Activated CD4-positive, alpha-beta T cell treated with anti-CD3 and anti-CD28 coated beads, Interleukin-2, amount 10 ng/mL, durations not matched to agents 24 days and 14 days (primary cell): ENCODE measurements at regions of chr5 and their contacts with region 1.

Region 1: GRCh38 chr5:151252762-151253604 is at the start of gene GM2A:
- DNase-seq: peak; percentile 100
- H3K4me3 Mint-ChIP-seq: peak within 1 kb of the TSS; percentile 89
- H3K27ac Mint-ChIP-seq: peak within 1 kb of the TSS; percentile 95
- H3K4me1 Mint-ChIP-seq: peaks cover 30% of the 10 kb centered on the region
- H3K27me3 Mint-ChIP-seq: no peaks in the 10 kb centered on the region
- total RNA-seq, gene GM2A: 15.4 and 16.0 TPM in 2 replicates

Region 2: DNA sequence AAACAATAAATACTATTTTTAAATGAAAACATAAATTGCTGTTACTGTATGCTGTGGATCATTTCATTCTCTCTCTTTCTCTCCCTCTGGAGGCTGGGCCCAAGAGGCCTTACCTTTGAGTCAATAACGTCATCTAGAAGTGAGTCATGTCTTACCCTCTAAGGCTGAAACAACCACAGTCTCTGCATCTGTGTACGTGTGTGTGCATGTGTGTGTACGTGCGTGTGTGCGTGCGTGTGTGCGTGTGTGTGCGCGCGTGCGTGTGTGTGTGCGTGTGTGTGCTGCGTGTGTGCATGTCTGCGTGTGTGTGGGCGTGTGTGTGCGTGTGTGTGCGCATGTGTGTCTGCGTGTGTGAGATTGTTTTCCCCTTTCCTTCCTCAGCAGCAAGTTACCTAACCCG is 1860.3 kb before region 1 on chr5:
- intact Hi-C with region 1: no loop called
- DNase-seq: no peak
- H3K4me3 Mint-ChIP-seq: no peak overlapping the region
- H3K27ac Mint-ChIP-seq: no peak overlapping the region
- H3K4me1 Mint-ChIP-seq: no peaks in the 10 kb centered on the region
- H3K27me3 Mint-ChIP-seq: peaks cover 15% of the 10 kb centered on the region

Region 3: GRCh38 chr5:149731639-149732323 is 1521.2 kb before region 1 on chr5:
- intact Hi-C with region 1: loop called (anchors 10 kb)
- DNase-seq: peak; percentile 87
- H3K4me3 Mint-ChIP-seq: peak overlapping the region; percentile 87
- H3K27ac Mint-ChIP-seq: peak overlapping the region; percentile 87
- H3K4me1 Mint-ChIP-seq: peaks cover 7% of the 10 kb centered on the region
- H3K27me3 Mint-ChIP-seq: peaks cover 10% of the 10 kb centered on the region

Region 4: DNA sequence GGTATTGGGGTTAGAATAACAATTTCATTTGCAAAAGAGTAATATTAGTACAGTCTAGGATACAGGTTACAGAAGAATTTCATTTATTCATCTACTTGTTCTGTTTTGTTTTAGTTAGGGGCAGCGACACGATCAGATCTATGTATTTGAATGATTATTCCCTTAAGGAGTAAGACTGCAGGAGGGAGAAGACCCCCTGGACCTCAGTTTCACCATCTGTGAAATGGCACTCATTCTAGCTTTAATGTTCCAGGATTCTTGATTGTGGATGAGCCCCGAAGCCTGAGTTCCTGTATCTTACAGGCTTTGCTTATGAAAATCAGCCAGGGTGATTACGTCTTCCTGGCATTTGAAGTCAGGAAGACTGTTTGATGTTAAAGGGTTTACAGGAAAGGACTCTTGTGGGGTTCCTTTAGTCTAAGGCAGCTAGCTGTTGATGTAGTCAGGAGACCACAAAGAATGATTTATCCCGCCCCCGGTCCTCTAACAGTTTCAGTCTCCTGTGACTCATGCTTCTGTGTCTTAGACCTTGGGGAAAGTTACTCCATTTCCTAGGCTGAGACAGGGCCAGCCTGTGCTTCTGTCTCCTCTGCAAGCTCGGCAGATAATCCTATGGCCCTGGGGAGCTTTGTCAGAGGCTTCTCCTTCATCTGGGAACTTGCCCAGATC is 462.9 kb before region 1 on chr5:
- intact Hi-C with region 1: loop called (anchors 5 kb)
- DNase-seq: peak; percentile 89
- H3K4me3 Mint-ChIP-seq: peak overlapping the region; percentile 82
- H3K27ac Mint-ChIP-seq: peak overlapping the region; percentile 84
- H3K4me1 Mint-ChIP-seq: peaks cover 55% of the 10 kb centered on the region
- H3K27me3 Mint-ChIP-seq: no peaks in the 10 kb centered on the region

Region 5: GRCh38 chr5:151080623-151081430 is 172.2 kb before region 1 on chr5 and contains the start of gene TNIP1:
- intact Hi-C with region 1: loop called (anchors 2 kb)
- DNase-seq: peak; percentile 99
- H3K4me3 Mint-ChIP-seq: peak within 1 kb of the TSS; percentile 86
- H3K27ac Mint-ChIP-seq: peak within 1 kb of the TSS; percentile 94
- H3K4me1 Mint-ChIP-seq: peaks cover 77% of the 10 kb centered on the region
- H3K27me3 Mint-ChIP-seq: no peaks in the 10 kb centered on the region
- total RNA-seq, gene TNIP1: 345 and 360 TPM in 2 replicates

Region 6: DNA sequence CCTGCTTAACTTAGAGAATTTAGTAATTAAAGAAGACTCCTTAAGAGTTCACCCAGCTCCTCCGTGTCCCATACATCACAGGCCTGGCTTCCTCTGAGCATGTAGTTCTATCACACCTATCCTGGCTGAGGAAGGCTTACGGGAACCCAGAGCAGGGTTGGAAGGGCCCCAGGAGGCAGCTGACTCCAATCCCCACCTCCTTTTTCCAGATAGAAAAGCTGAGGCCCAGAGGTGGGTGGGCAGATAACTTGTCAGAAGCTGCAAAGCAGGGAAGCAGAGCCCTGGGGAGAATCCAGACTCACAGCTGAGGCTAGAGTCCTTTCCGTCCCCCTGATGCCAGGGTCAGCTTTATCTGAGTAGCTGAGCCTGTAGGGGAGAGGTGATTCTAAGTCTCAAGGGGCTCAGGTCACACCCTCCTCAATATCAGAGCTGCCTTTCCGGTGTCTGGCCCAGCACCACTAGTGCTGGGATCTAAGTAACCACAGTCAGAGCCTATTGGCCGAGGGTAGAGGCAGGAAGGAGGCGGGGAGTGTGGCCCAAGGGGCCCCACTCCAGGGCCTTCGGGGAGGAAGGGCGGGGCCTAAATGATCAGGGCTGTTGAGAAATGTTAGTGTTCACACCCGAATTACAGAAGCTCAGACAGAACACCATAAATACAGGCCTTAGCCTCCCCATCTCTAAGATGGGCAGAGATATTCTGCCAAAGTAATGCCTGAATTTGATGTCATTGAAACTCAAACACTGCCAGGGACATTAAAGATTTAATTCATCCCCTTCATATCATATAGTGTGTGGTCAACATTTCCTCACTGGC is 39.0 kb before region 1 on chr5:
- intact Hi-C with region 1: loop called (anchors 1 kb)
- DNase-seq: peak; percentile 95
- H3K4me3 Mint-ChIP-seq: peak overlapping the region; percentile 91
- H3K27ac Mint-ChIP-seq: peak overlapping the region; percentile 95
- H3K4me1 Mint-ChIP-seq: peaks cover 72% of the 10 kb centered on the region
- H3K27me3 Mint-ChIP-seq: no peaks in the 10 kb centered on the region

Region 7: GRCh38 chr5:151264113-151264512 is 11.1 kb after region 1 on chr5:
- intact Hi-C with region 1: loop called (anchors 1 kb)
- DNase-seq: no peak
- H3K4me3 Mint-ChIP-seq: peak overlapping the region; percentile 47
- H3K27ac Mint-ChIP-seq: peak overlapping the region; percentile 87
- H3K4me1 Mint-ChIP-seq: peaks cover 14% of the 10 kb centered on the region
- H3K27me3 Mint-ChIP-seq: no peaks in the 10 kb centered on the region

Region 8: GRCh38 chr5:151771259-151772028 is 518.5 kb after region 1 on chr5 and contains the start of gene G3BP1:
- intact Hi-C with region 1: loop called (anchors 1 kb)
- DNase-seq: peak; percentile 100
- H3K4me3 Mint-ChIP-seq: peak within 1 kb of the TSS; percentile 98
- H3K27ac Mint-ChIP-seq: peak within 1 kb of the TSS; percentile 92
- H3K4me1 Mint-ChIP-seq: peaks cover 30% of the 10 kb centered on the region
- H3K27me3 Mint-ChIP-seq: no peaks in the 10 kb centered on the region
- total RNA-seq, gene G3BP1: 362 and 367 TPM in 2 replicates